PC-3 (cell line): ENCODE measurements at regions of chr11 and their contacts with region 1.

Region 1: GRCh38 chr11:111878849-111879636 is at the starts of genes CFAP68 and FDXACB1:
- DNase-seq: peak; percentile 99
- ATAC-seq: peak; percentile 84
- H3K4me3 ChIP-seq: peak within 1 kb of the TSS; percentile 80
- H3K27ac ChIP-seq: peak within 1 kb of the TSS; percentile 79
- H3K4me1 ChIP-seq: peaks cover 9% of the 10 kb centered on the region
- H3K27me3 ChIP-seq: no peaks in the 10 kb centered on the region
- CTCF ChIP-seq: peak; percentile 91
- total RNA-seq, gene CFAP68: 26.0 and 27.4 TPM in 2 replicates
- total RNA-seq, gene FDXACB1: 2.5 and 3.0 TPM in 2 replicates

Region 2: GRCh38 chr11:111926505-111927391 is 47.7 kb after region 1 on chr11:
- CTCF ChIA-PET with region 1: interaction called, 4 read pairs
- POLR2A ChIA-PET with region 1: interaction called, 4 read pairs
- intact Hi-C with region 1: loop called (anchors 1 kb)
- DNase-seq: peak; percentile 99
- ATAC-seq: peak; percentile 92
- H3K4me3 ChIP-seq: peak overlapping the region; percentile 69
- H3K27ac ChIP-seq: peak overlapping the region; percentile 17
- H3K4me1 ChIP-seq: peaks cover 25% of the 10 kb centered on the region
- H3K27me3 ChIP-seq: no peaks in the 10 kb centered on the region
- CTCF ChIP-seq: no peak

Region 3: GRCh38 chr11:111982019-111982464 is 103.0 kb after region 1 on chr11:
- CTCF ChIA-PET with region 1: interaction called, 7 read pairs
- POLR2A ChIA-PET with region 1: no interaction called
- intact Hi-C with region 1: loop called (anchors 1 kb)
- DNase-seq: peak; percentile 84
- ATAC-seq: peak; percentile 57
- H3K4me3 ChIP-seq: no peak overlapping the region
- H3K27ac ChIP-seq: peak overlapping the region; percentile 24
- H3K4me1 ChIP-seq: peaks cover 35% of the 10 kb centered on the region
- H3K27me3 ChIP-seq: no peaks in the 10 kb centered on the region
- CTCF ChIP-seq: peak; percentile 90

Region 4: DNA sequence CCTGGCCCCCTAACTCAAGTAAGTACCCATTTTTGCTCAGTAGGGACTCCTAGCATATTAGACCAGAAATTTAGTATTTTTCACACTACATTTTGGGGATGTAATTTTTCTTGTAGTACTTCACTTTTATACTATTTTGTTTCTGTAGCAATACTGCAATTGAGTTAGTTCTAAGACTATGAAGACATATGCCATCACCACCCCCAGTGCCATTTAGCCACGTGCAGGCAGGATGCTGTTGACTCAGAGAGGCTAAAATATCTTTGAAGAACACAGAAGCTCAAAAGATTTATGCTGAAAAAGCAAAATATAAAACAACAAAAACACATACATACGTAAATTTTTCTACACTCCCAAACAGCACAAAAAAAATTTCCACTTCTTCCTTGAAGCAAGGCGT is 117.1 kb after region 1 on chr11:
- CTCF ChIA-PET with region 1: no interaction called
- POLR2A ChIA-PET with region 1: no interaction called
- intact Hi-C with region 1: loop called (anchors 1 kb)
- DNase-seq: no peak
- ATAC-seq: no peak
- H3K4me3 ChIP-seq: no peak overlapping the region
- H3K27ac ChIP-seq: no peak overlapping the region
- H3K4me1 ChIP-seq: no peaks in the 10 kb centered on the region
- H3K27me3 ChIP-seq: no peaks in the 10 kb centered on the region
- CTCF ChIP-seq: no peak

Region 5: DNA sequence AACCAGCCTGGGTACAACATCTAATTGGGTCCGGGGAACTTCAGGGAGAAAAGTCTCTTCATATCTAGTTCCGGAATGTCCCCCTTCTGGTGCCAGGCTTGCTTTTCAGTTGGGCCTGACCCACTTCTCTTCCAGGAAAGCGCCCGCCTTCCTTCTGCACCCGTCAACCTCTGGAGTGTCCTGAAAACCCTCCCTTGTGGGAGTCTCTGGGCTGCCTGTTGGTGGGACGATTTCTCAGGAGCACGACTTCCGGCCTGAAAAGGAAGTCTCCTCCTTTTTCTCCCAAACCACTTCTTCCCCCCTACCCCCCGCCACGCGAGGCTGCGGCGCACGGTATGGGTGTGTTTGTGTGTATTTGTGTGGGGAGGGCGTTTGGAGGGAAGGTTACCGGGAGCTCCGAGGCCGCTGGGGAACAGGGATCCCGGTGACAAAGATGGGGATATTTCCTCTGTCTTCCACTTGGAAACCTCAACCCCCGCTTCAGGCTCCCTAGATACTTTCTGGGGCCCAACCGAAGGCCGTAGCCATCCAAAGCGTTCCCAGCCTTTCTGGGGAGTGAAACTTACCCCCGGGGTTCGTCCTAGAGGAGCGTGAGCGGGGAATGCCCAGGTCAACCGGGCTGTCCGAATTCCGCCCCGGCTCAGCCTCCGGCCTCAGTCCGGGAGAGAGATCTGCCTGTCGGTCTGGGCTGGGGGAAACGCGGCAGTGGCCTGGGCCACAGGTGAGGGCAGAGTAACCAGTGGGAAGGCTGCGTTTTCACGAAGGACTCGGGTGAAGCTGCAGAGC is 195.2 kb after region 1 on chr11 and contains the start of gene NKAPD1:
- CTCF ChIA-PET with region 1: no interaction called
- POLR2A ChIA-PET with region 1: no interaction called
- intact Hi-C with region 1: loop called (anchors 5 kb)
- DNase-seq: peak; percentile 92
- ATAC-seq: peak; percentile 90
- H3K4me3 ChIP-seq: peak within 1 kb of the TSS; percentile 93
- H3K27ac ChIP-seq: peak within 1 kb of the TSS; percentile 89
- H3K4me1 ChIP-seq: peaks cover 16% of the 10 kb centered on the region
- H3K27me3 ChIP-seq: no peaks in the 10 kb centered on the region
- CTCF ChIP-seq: no peak
- total RNA-seq, gene NKAPD1: 19.4 and 34.3 TPM in 2 replicates

Region 6: GRCh38 chr11:112156956-112157766 is 278.1 kb after region 1 on chr11:
- CTCF ChIA-PET with region 1: no interaction called
- POLR2A ChIA-PET with region 1: no interaction called
- intact Hi-C with region 1: loop called (anchors 2 kb)
- DNase-seq: peak; percentile 100
- ATAC-seq: peak; percentile 97
- H3K4me3 ChIP-seq: 0 out of 2 replicates have a peak overlapping the region, but pooled peaks have one; percentile 15
- H3K27ac ChIP-seq: peak overlapping the region; percentile 92
- H3K4me1 ChIP-seq: peaks cover 61% of the 10 kb centered on the region
- H3K27me3 ChIP-seq: no peaks in the 10 kb centered on the region
- CTCF ChIP-seq: no peak